ENCODE measurements at regions of chr5 and their contacts with region 1.

Region 1: GRCh38 chr5:1641560-1642166 is 117.9 kb upstream of the LPCAT1 start:
- DNase-seq: peak; percentile 78 to 92
- H3K4me3 ChIP-seq: no peak overlapping the region
- H3K27ac ChIP-seq: no peak overlapping the region
- H3K4me1 ChIP-seq: no peaks in the 10 kb centered on the region
- H3K27me3 ChIP-seq: peaks cover 87% of the 10 kb centered on the region
- CTCF ChIP-seq: peak; percentile 90

Region 2: GRCh38 chr5:442335-443238 is 1199.1 kb before region 1 on chr5 and contains the start of gene EXOC3:
- CTCF ChIA-PET with region 1: no interaction called
- POLR2A ChIA-PET with region 1: no interaction called
- intact Hi-C with region 1: loop called (anchors 10 kb)
- DNase-seq: peak; percentile 71 to 92
- H3K4me3 ChIP-seq: peak within 1 kb of the TSS; percentile 99
- H3K27ac ChIP-seq: peak within 1 kb of the TSS; percentile 25
- H3K4me1 ChIP-seq: peaks cover 24% of the 10 kb centered on the region
- H3K27me3 ChIP-seq: no peaks in the 10 kb centered on the region
- CTCF ChIP-seq: no peak
- total RNA-seq, gene EXOC3: 155 and 188 TPM in 2 replicates

Region 3: GRCh38 chr5:989961-990530 is 651.6 kb before region 1 on chr5:
- CTCF ChIA-PET with region 1: interaction called, 3 read pairs
- POLR2A ChIA-PET with region 1: no interaction called
- intact Hi-C with region 1: loop called (anchors 2 kb)
- DNase-seq: peak in 1 of 2 experiments; percentile 52
- H3K4me3 ChIP-seq: no peak overlapping the region
- H3K27ac ChIP-seq: no peak overlapping the region
- H3K4me1 ChIP-seq: peaks cover 8% of the 10 kb centered on the region
- H3K27me3 ChIP-seq: peaks cover 87% of the 10 kb centered on the region
- CTCF ChIP-seq: 0 out of 2 replicates have a peak, but pooled peaks have one; percentile 21

Region 4: GRCh38 chr5:1385395-1386273 is 256.0 kb before region 1 on chr5:
- CTCF ChIA-PET with region 1: no interaction called
- POLR2A ChIA-PET with region 1: no interaction called
- intact Hi-C with region 1: loop called (anchors 5 kb)
- DNase-seq: peak in 1 of 2 experiments; percentile 94
- H3K4me3 ChIP-seq: peak overlapping the region; percentile 68
- H3K27ac ChIP-seq: no peak overlapping the region
- H3K4me1 ChIP-seq: 0 out of 2 replicates have a peak, but pooled peaks cover 10% of the 10 kb centered on the region
- H3K27me3 ChIP-seq: peaks cover 94% of the 10 kb centered on the region
- CTCF ChIP-seq: no peak

Region 5: GRCh38 chr5:1511651-1512540 is 129.8 kb before region 1 on chr5:
- CTCF ChIA-PET with region 1: no interaction called
- POLR2A ChIA-PET with region 1: no interaction called
- intact Hi-C with region 1: loop called (anchors 1 kb)
- DNase-seq: peak; percentile 75 to 81
- H3K4me3 ChIP-seq: no peak overlapping the region
- H3K27ac ChIP-seq: no peak overlapping the region
- H3K4me1 ChIP-seq: peaks cover 51% of the 10 kb centered on the region
- H3K27me3 ChIP-seq: no peaks in the 10 kb centered on the region
- CTCF ChIP-seq: peak; percentile 66

Region 6: GRCh38 chr5:1685066-1685465 is 43.4 kb after region 1 on chr5:
- CTCF ChIA-PET with region 1: no interaction called
- POLR2A ChIA-PET with region 1: no interaction called
- intact Hi-C with region 1: no loop called
- DNase-seq: no peak
- H3K4me3 ChIP-seq: no peak overlapping the region
- H3K27ac ChIP-seq: no peak overlapping the region
- H3K4me1 ChIP-seq: no peaks in the 10 kb centered on the region
- H3K27me3 ChIP-seq: peaks cover 96% of the 10 kb centered on the region
- CTCF ChIP-seq: no peak